ENCODE measurements at regions of chr3 and their contacts with region 1.

Region 1: DNA sequence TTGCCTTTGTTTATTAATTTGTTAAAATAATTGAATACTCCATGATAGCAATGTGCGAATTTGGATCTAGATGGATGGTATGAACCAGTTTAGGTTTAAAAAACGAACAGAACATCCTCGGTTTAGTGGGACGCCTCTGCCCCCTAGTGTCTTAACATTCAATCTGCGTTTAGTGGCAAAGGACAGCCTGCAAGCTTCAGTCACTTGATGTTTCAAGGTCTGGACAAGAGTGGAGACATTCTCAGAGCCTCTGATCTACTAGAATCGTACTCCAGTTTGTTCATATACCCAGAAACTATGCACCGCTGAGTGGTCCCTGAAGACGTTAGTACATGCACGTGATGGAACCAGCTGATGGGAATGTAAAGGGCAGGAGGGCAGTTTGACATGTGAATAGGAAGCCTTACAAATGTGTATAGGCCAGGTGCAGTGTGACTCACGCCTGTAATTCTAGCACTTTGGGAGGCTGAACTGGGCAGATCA is 17.8 kb upstream of the ATP13A4 start:
- DNase-seq: peak; percentile 8 to 55 (median 36)
- ATAC-seq: no peak
- H3K4me3 ChIP-seq: no peak overlapping the region
- H3K4me3 Mint-ChIP-seq: no peak overlapping the region
- H3K27ac ChIP-seq: no peak overlapping the region
- H3K27ac Mint-ChIP-seq: no peak overlapping the region
- H3K4me1 ChIP-seq: no peaks in the 10 kb centered on the region
- H3K4me1 Mint-ChIP-seq: no peaks in the 10 kb centered on the region
- H3K27me3 ChIP-seq: no peaks in the 10 kb centered on the region
- H3K27me3 Mint-ChIP-seq: no peaks in the 10 kb centered on the region
- CTCF ChIP-seq: peak; percentile 68

Region 2: DNA sequence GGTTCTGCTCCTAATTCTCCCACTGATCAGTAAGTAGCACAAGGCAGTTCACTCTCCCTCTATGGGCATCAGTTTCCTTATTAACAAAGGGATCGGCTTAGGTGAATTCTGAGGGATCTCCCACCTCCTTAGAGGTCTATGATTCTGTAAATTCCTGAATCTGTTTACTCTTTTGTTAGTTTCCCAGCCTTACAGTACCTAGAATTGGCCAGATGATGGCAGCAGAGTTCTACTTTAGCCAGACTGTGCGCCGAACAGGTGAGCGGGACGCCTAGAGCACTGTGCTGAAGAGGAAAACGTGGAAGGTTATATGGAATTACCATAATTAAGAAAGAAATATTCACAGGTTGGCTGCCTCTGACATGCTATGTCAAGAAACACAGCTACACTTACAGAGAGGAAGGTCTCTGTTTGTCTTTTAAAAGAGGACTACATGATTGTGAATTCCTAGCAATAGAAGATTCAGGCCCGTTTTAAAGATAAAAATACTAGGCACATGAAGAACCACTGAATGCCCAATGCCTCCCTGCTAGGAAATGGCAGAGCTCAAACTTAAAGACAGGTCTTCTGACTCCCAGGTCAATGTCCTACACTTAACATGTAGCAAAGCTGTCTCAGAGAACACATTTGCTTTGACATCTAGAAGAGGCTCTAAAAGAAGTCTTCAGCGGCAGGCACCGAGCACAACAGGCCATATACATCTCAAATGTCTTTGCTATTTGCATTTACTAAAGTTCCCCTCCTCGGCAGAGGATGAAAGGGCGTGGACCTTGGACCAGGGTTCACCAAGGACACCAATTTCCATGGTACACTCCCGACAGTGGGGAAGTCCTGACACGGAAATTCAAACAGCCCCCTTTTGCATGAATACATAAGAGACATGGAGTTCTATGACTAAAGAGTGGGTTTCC is 1105.0 kb before region 1 on chr3:
- CTCF ChIA-PET with region 1: no interaction called
- POLR2A ChIA-PET with region 1: no interaction called
- intact Hi-C with region 1: loop called in 1 of 2 experiments (anchors 2 kb)
- DNase-seq: peak in 8 of 9 experiments; percentile 12 to 51 (median 36)
- ATAC-seq: peak; percentile 69
- H3K4me3 ChIP-seq: no peak overlapping the region
- H3K4me3 Mint-ChIP-seq: no peak overlapping the region
- H3K27ac ChIP-seq: no peak overlapping the region
- H3K27ac Mint-ChIP-seq: no peak overlapping the region
- H3K4me1 ChIP-seq: no peaks in the 10 kb centered on the region
- H3K4me1 Mint-ChIP-seq: no peaks in the 10 kb centered on the region
- H3K27me3 ChIP-seq: no peaks in the 10 kb centered on the region
- H3K27me3 Mint-ChIP-seq: peaks cover 15% of the 10 kb centered on the region
- CTCF ChIP-seq: peak; percentile 76

Region 3: DNA sequence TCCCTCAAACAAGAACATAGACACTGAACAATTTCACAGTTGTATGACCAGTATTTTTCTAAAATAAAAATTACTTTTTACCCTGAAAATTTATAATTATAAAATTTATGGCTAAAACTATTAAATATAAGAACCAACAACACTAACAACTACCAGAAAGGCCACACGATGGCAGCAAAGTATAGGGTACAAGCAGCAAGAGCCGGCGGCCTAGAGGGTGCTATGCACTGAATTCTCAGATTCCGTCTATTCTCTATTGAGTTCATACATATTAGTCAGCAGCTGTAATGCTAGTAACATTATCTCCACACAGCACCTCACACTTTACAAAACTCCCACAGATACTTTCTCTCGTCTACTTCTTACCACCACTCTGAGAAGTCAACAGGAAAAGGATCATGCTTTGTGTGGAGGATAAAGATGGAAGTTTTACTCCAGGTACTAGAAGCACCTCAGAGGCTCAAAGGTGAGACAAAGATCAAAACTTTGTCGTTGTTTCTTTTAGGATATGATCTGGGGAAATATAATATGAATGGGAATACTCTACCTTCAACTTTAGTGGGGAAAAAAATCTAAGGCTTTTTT is 1005.7 kb before region 1 on chr3:
- CTCF ChIA-PET with region 1: no interaction called
- POLR2A ChIA-PET with region 1: no interaction called
- intact Hi-C with region 1: loop called in 1 of 2 experiments (anchors 2 kb)
- DNase-seq: peak in 8 of 9 experiments; percentile 9 to 55 (median 42)
- ATAC-seq: no peak
- H3K4me3 ChIP-seq: no peak overlapping the region
- H3K4me3 Mint-ChIP-seq: no peak overlapping the region
- H3K27ac ChIP-seq: no peak overlapping the region
- H3K27ac Mint-ChIP-seq: no peak overlapping the region
- H3K4me1 ChIP-seq: no peaks in the 10 kb centered on the region
- H3K4me1 Mint-ChIP-seq: peaks cover 2% of the 10 kb centered on the region
- H3K27me3 ChIP-seq: no peaks in the 10 kb centered on the region
- H3K27me3 Mint-ChIP-seq: peaks cover 2% of the 10 kb centered on the region
- CTCF ChIP-seq: peak; percentile 37

Region 4: DNA sequence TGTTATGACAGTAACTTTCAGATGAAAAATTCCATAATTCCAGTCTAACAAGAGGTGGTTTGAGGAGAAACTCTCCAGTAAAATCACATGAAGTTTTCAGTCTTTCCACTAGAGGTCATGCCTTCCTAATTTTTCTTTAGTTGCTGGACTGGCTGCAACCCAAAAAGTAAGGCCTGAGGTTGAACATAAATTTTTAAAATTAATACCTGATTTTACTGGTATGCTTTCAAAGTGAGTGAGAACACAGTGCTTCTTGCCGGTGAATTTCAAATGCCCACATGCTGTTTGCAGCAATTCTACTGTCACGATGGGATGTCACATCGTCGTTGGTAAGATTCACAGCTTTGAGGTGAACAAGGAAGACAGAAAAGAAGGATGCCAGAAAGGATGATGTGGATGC is 756.1 kb before region 1 on chr3:
- CTCF ChIA-PET with region 1: no interaction called
- POLR2A ChIA-PET with region 1: no interaction called
- intact Hi-C with region 1: loop called in 1 of 2 experiments (anchors 5 kb)
- DNase-seq: peak in 2 of 9 experiments; percentile 14 to 40
- ATAC-seq: no peak
- H3K4me3 ChIP-seq: no peak overlapping the region
- H3K4me3 Mint-ChIP-seq: no peak overlapping the region
- H3K27ac ChIP-seq: no peak overlapping the region
- H3K27ac Mint-ChIP-seq: no peak overlapping the region
- H3K4me1 ChIP-seq: no peaks in the 10 kb centered on the region
- H3K4me1 Mint-ChIP-seq: no peaks in the 10 kb centered on the region
- H3K27me3 ChIP-seq: no peaks in the 10 kb centered on the region
- H3K27me3 Mint-ChIP-seq: no peaks in the 10 kb centered on the region
- CTCF ChIP-seq: no peak

Region 5: DNA sequence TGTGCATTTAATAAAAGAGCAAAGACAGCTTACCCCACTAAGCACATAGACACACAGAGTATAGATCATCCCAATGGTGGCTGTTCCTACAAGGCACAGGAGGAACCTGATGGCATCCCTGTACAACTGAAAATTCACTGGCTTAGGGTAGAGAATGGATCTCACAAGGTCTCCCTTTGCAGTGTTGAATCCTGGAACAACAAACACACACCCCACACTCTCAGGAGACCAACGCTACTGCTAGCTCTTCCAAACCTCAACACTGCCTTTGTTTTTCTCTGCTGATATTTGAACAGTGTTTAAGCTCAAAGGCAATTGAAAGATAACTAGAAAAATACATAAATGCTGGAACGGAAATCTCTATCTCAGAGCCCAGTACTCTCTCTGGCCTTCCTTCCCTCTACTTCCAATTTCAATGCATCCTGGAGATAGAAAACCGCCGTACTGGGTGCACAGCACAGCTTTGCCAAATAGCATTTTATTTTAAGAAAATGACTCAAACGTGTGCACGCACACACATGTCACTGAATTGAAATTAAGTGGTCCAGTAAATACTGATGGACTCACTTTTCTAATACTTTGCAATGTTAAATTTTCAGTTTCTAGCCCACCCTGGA is 106.4 kb before region 1 on chr3:
- CTCF ChIA-PET with region 1: interaction called, 4 read pairs
- POLR2A ChIA-PET with region 1: no interaction called
- intact Hi-C with region 1: loop called in 1 of 2 experiments (anchors 2 kb)
- DNase-seq: no peak
- ATAC-seq: no peak
- H3K4me3 ChIP-seq: no peak overlapping the region
- H3K4me3 Mint-ChIP-seq: no peak overlapping the region
- H3K27ac ChIP-seq: no peak overlapping the region
- H3K27ac Mint-ChIP-seq: no peak overlapping the region
- H3K4me1 ChIP-seq: no peaks in the 10 kb centered on the region
- H3K4me1 Mint-ChIP-seq: no peaks in the 10 kb centered on the region
- H3K27me3 ChIP-seq: no peaks in the 10 kb centered on the region
- H3K27me3 Mint-ChIP-seq: no peaks in the 10 kb centered on the region
- CTCF ChIP-seq: no peak

Region 6: DNA sequence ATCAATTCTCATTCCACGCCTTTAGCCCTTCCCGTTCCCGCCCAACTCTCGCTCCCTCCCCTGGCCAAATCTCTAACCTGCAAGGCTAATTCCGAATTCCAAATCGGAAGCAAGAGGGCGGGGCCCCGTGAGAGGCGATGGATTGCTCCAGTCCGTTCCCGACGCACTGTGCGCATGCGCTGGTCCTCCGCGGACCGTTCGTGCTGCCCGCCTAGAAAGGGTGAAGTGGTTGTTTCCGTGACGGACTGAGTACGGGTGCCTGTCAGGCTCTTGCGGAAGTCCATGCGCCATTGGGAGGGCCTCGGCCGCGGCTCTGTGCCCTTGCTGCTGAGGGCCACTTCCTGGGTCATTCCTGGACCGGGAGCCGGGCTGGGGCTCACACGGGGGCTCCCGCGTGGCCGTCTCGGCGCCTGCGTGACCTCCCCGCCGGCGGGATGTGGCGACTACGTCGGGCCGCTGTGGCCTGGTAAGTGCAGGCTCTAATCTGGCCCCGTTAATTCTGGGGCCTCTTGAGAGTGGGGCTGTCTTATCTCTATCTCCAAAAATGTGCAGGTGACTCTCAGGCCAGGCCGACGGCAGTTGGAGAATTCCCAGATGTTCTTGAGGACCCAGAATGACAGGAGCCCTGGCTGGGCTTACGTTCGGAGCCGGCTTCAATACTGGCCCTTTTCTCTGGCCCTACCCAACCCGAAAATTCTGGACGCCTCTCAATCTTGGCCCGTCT is 20.6 kb after region 1 on chr3 and contains the start of gene OPA1:
- CTCF ChIA-PET with region 1: no interaction called
- POLR2A ChIA-PET with region 1: no interaction called
- intact Hi-C with region 1: no loop called
- DNase-seq: peak; percentile 68 to 95 (median 85)
- ATAC-seq: peak; percentile 85
- H3K4me3 ChIP-seq: peak within 1 kb of the TSS; percentile 73 to 83
- H3K4me3 Mint-ChIP-seq: peak within 1 kb of the TSS; percentile 99
- H3K27ac ChIP-seq: peak within 1 kb of the TSS; percentile 76 to 88
- H3K27ac Mint-ChIP-seq: peak within 1 kb of the TSS; percentile 98
- H3K4me1 ChIP-seq: peaks cover 20% of the 10 kb centered on the region
- H3K4me1 Mint-ChIP-seq: peaks cover 58% of the 10 kb centered on the region
- H3K27me3 ChIP-seq: no peaks in the 10 kb centered on the region
- H3K27me3 Mint-ChIP-seq: no peaks in the 10 kb centered on the region
- CTCF ChIP-seq: no peak
- total RNA-seq, gene OPA1: 64.0 to 69.9 TPM

Region 7: DNA sequence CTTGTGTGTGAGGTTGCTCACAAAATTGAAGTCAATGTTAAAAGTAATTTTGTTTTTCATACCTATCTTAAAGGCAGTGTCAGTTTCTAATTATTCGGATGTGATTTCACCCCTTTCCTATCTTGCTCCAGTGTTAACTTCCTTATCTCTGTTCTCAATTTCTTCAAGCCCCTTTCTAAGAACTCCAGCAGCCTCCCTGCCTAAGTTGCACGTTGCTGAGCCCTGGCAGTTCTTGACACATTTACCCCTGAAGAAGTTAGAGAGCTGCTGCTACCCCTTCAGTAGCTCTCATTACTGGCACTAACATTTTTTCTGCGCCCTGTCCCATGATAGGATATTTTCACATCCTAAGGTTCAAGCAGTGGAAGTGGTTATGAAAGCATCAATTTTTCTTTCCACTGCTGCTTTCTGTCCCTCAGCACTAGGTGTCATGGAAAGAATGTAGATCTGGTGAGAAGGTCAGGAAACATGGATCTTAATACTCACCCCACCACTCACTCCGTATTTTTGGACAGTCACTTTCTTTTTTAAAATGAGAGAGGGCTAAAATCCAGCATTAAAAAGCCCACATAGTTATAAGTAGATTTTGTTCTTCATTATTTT is 83.5 kb after region 1 on chr3:
- CTCF ChIA-PET with region 1: no interaction called
- POLR2A ChIA-PET with region 1: no interaction called
- intact Hi-C with region 1: no loop called
- DNase-seq: no peak
- ATAC-seq: no peak
- H3K4me3 ChIP-seq: no peak overlapping the region
- H3K4me3 Mint-ChIP-seq: no peak overlapping the region
- H3K27ac ChIP-seq: no peak overlapping the region
- H3K27ac Mint-ChIP-seq: no peak overlapping the region
- H3K4me1 ChIP-seq: no peaks in the 10 kb centered on the region
- H3K4me1 Mint-ChIP-seq: no peaks in the 10 kb centered on the region
- H3K27me3 ChIP-seq: no peaks in the 10 kb centered on the region
- H3K27me3 Mint-ChIP-seq: no peaks in the 10 kb centered on the region
- CTCF ChIP-seq: no peak